ENCODE measurements at regions of chr7 and their contacts with region 1.

Region 1: DNA sequence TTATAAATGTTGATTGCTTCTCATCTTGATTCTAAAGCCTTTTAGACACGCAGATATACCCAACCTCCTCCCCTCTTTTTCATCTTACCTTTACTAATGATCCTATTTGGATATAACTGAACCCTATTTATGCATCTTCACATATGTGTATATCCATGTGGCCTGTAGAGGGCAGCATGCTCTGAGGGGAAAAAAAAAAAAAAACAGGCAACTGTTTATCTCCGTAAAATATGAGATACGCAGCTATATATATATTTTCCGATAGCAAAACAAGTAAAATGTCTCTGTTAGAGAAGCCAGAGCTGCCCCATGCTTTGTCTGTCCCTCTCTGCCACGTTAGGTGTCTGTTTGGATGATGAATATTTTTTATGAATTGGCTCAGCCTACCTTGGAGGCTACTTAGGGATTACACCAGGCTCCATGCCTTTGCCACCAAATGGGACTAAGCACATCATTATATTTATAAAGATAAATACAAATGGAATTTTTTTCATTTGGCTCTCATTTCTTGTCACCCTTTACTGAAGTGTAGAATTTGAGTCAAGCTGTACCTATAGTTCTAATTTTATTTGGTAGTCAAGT is 174.8 kb upstream of the FZD1 start:
- DNase-seq: no peak
- ATAC-seq: peak; percentile 42

Region 2: DNA sequence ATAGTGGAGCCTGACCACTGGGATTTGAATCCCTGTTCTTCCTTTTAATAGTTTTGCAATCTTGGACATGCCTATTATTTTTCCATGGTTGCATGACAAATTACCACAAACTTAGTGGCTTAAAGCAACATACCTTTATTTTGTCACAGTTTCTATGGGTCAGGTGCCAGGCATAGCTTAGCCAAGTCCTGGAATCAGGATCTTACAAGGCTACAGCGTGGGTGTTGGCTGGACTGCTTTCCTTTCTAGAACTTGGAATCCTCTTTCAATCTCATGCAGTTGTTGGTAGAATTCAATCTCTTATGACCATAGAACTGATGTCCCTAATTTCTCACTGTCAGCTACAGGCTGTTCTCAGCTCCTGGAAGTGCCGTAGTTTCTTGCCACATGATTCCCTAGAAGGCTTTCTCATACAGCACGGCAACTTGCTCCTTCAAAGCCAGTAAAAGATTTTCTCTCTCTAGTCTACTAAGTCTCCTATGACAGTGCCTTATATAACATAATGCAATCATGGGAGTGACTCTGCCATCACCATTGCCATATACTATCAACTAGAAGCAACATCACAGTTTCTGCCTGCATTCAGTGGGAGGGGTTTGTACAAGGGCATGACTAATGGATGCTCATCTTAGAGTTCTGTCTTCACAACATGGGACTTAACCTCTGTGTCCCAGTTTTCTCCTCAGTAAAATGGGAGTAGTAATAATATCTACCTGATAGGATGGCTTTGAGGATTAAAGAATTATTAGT is 68.7 kb before region 1 on chr7:
- intact Hi-C with region 1: no loop called
- DNase-seq: no peak
- ATAC-seq: no peak

Region 3: GRCh38 chr7:91264046-91264923 is 174.8 kb after region 1 on chr7 and contains the start of gene FZD1:
- intact Hi-C with region 1: loop called in 1 of 2 experiments (anchors 10 kb)
- DNase-seq: peak; percentile 94 to 98
- ATAC-seq: peak; percentile 92
- total RNA-seq, gene FZD1: 7.4 to 11.0 TPM

Region 4: GRCh38 chr7:91784463-91784862 is 695.0 kb after region 1 on chr7:
- intact Hi-C with region 1: loop called in 1 of 2 experiments (anchors 5 kb)
- DNase-seq: no peak
- ATAC-seq: peak; percentile 84

Measured in left colon (tissue), 2 donors.